Right ventricle myocardium superior (tissue), 1 donor: ENCODE measurements at regions of chr13 and their contacts with region 1.

Region 1: DNA sequence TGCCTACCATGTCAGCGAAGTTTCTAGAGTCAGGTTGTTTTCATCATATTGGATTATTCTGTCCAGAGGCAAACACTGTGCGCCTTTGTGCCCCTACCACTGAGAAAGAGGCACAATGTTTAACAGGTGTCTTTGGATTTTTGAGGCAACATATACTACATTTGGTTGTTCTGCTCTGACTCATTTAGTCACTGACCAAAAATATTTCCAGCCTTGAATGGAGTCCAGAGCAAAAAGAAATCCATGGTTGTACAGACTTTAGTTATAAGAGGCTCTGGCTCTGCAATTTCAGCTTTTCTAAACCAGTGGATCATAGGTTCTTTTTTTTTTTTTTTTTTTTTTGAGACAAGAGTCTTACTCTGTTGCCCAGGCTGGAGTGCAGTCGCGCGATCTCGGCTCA is 35.7 kb downstream of the LACC1 start:
- DNase-seq: no peak
- ATAC-seq: no peak

Region 2: DNA sequence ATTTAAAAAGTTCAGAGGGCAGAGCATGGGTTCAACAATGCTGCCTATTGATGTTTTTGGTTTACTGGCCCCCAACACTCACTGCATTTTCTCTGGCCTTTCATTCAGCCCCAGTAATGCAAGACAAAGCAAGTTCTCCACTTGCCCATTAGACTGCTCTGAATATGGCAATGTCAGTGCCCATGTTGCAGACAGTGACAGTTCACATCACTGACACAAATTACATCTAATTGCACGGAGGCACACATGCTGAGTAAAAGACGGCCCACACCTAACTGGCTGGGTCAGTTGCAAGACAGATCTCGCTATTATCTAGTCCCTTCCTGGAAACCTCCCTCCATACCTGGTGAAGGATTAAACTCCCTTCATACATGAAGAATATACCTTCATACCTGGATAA is 182.7 kb before region 1 on chr13:
- intact Hi-C with region 1: no loop called
- DNase-seq: no peak
- ATAC-seq: no peak

Region 3: DNA sequence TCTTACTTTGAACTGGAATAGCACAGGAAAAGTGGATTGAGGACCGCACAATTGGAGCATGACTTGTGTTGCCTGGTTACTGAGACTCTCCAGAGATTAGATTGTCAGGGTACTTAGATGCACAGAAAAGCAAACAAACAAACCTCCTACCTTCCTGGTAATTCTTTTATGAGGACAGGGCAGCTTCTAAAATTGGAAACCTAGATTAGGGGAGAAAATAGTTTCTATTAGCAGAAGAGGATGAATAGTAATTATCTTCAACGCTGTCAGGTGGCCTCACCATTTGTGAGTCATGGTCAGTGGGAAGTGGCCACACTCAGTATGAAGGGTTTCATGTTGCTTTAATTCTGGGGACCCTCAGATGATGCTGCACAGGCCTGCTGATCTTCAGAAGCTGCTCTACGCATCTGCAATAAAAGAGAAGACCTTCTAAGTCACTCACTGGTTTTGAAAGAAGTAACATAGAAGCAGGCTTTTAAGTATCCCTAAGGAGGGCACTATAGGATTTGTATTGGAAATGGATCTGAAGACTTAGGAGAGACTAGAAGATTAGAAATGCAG is 71.0 kb after region 1 on chr13:
- intact Hi-C with region 1: loop called (anchors 10 kb)
- DNase-seq: no peak
- ATAC-seq: peak; percentile 91